ENCODE measurements at regions of chr12 and their contacts with region 1.

Region 1: DNA sequence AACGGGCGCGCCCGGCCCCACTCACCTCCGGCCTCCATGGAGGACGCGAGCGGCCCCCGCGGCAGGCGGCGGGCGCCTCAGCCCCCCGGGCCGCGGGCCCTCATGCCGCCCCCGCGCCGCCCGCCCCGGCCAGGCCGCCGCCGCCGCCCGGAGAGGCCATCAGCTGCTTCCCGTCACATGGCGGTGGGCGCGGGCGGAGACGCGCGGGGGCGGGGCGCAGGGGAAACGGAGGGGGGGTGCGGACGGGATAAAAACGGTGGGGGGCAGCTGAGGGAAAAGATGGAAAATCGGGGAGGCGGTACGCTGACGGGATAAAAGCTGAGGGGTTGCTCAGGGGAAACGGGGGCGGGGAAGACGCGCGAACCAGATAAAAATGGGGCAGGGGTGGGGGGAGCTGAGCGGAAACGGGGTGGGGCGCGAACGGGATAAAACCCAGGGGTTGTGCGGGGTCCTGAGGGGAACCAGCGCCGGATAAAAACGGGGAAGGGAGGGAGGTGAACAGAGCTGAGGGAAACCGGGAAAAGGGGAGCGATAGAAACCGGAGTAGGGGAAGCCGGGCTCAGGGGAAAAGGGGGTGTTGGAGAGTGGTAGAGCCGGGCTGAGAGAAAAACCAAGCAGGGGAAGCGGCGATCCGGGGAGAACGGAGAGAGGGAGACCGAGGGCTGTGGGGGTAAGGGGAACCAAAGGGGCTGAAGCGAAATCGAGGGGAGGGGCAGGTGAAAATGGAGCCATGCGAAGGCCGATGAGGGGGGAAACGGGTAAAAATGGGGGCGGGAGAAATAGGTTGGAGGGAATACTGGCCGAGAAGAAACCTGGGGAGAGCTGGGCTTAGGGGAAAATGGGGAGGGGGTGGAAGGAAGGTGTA is at the start of gene WSB2:
- DNase-seq: peak; percentile 88
- H3K4me3 Mint-ChIP-seq: peak within 1 kb of the TSS; percentile 93
- H3K27ac Mint-ChIP-seq: peak within 1 kb of the TSS; percentile 97
- H3K4me1 Mint-ChIP-seq: peaks cover 48% of the 10 kb centered on the region
- H3K27me3 Mint-ChIP-seq: no peaks in the 10 kb centered on the region
- total RNA-seq, gene WSB2: 129 and 133 TPM in 2 replicates

Region 2: GRCh38 chr12:118016424-118017264 is 44.6 kb before region 1 on chr12 and contains the start of gene RFC5:
- intact Hi-C with region 1: loop called (anchors 2 kb)
- DNase-seq: peak; percentile 99
- H3K4me3 Mint-ChIP-seq: peak within 1 kb of the TSS; percentile 98
- H3K27ac Mint-ChIP-seq: peak within 1 kb of the TSS; percentile 94
- H3K4me1 Mint-ChIP-seq: peaks cover 17% of the 10 kb centered on the region
- H3K27me3 Mint-ChIP-seq: peaks cover 7% of the 10 kb centered on the region
- total RNA-seq, gene RFC5: 82.9 and 84.4 TPM in 2 replicates

Region 3: GRCh38 chr12:118035246-118036041 is 25.8 kb before region 1 on chr12:
- intact Hi-C with region 1: loop called (anchors 1 kb)
- DNase-seq: no peak
- H3K4me3 Mint-ChIP-seq: peak overlapping the region; percentile 57
- H3K27ac Mint-ChIP-seq: peak overlapping the region; percentile 99
- H3K4me1 Mint-ChIP-seq: peaks cover 46% of the 10 kb centered on the region
- H3K27me3 Mint-ChIP-seq: peaks cover 2% of the 10 kb centered on the region

Region 4: GRCh38 chr12:118044075-118044474 is 17.2 kb before region 1 on chr12:
- intact Hi-C with region 1: loop called (anchors 1 kb)
- DNase-seq: no peak
- H3K4me3 Mint-ChIP-seq: peak overlapping the region; percentile 66
- H3K27ac Mint-ChIP-seq: peak overlapping the region; percentile 95
- H3K4me1 Mint-ChIP-seq: peaks cover 48% of the 10 kb centered on the region
- H3K27me3 Mint-ChIP-seq: no peaks in the 10 kb centered on the region

Region 5: GRCh38 chr12:118082161-118082560 is 20.9 kb after region 1 on chr12:
- intact Hi-C with region 1: no loop called
- DNase-seq: no peak
- H3K4me3 Mint-ChIP-seq: no peak overlapping the region
- H3K27ac Mint-ChIP-seq: no peak overlapping the region
- H3K4me1 Mint-ChIP-seq: no peaks in the 10 kb centered on the region
- H3K27me3 Mint-ChIP-seq: no peaks in the 10 kb centered on the region

Region 6: GRCh38 chr12:118103604-118104382 is 42.5 kb after region 1 on chr12 and contains the start of gene VSIG10:
- intact Hi-C with region 1: loop called (anchors 2 kb)
- DNase-seq: peak; percentile 80
- H3K4me3 Mint-ChIP-seq: peak within 1 kb of the TSS; percentile 91
- H3K27ac Mint-ChIP-seq: peak within 1 kb of the TSS; percentile 78
- H3K4me1 Mint-ChIP-seq: peaks cover 5% of the 10 kb centered on the region
- H3K27me3 Mint-ChIP-seq: peaks cover 18% of the 10 kb centered on the region
- total RNA-seq, gene VSIG10: 12.8 and 14.4 TPM in 2 replicates

Region 7: DNA sequence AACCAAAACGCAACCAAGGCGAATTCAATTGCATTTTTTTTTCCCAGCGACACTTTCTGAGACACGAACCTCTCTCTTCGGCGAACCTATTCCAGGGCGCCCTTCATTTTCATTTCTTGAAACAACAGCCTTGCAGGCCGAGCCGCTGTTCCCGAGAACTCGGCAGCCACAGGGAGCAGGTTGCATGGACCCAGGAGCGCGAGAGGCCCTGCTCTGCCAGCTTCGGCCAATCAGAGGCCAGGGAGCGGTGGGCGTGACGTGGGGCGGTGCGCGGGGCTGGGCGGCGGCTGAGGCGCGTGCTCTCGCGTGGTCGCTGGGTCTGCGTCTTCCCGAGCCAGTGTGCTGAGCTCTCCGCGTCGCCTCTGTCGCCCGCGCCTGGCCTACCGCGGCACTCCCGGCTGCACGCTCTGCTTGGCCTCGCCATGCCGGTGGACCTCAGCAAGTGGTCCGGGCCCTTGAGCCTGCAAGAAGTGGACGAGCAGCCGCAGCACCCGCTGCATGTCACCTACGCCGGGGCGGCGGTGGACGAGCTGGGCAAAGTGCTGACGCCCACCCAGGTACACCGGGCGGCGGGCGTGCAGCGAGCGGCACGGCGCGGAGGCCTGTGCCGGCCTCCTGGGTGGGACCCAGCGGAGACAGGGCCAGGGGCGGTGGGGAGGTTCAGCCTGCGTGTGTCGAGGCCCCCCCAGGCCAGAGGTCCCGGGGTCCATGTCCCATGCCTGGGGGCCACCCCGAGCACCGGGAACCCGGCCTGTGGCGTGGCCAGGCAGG is 74.7 kb after region 1 on chr12 and contains the start of gene PEBP1:
- intact Hi-C with region 1: loop called (anchors 1 kb)
- DNase-seq: peak; percentile 99
- H3K4me3 Mint-ChIP-seq: peak within 1 kb of the TSS; percentile 99
- H3K27ac Mint-ChIP-seq: peak within 1 kb of the TSS; percentile 95
- H3K4me1 Mint-ChIP-seq: peaks cover 24% of the 10 kb centered on the region
- H3K27me3 Mint-ChIP-seq: no peaks in the 10 kb centered on the region
- total RNA-seq, gene PEBP1: 206 and 209 TPM in 2 replicates

Region 8: DNA sequence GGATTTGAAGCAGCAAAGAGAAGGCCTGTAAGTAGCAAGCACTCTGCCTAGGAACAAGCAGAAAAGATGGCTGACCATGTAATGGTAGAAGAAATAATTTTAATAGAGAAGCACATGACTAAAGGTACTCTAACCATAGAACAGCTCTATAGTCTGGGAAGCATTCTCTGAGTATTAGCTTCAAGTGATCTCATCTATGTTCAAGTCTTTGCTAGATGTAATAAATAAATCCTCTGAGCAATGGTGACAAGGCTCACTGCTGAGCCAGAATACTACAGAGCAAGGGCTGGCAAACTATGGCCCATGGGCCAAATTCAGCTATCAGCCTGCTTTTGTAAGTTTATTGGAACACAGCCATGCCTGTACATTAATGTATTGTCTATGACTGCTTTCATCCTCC is 159.5 kb after region 1 on chr12:
- intact Hi-C with region 1: no loop called
- DNase-seq: peak; percentile 39
- H3K4me3 Mint-ChIP-seq: no peak overlapping the region
- H3K27ac Mint-ChIP-seq: no peak overlapping the region
- H3K4me1 Mint-ChIP-seq: no peaks in the 10 kb centered on the region
- H3K27me3 Mint-ChIP-seq: no peaks in the 10 kb centered on the region

Region 9: GRCh38 chr12:118357257-118358007 is 296.2 kb after region 1 on chr12:
- intact Hi-C with region 1: loop called (anchors 5 kb)
- DNase-seq: peak; percentile 80
- H3K4me3 Mint-ChIP-seq: peak overlapping the region; percentile 95
- H3K27ac Mint-ChIP-seq: peak overlapping the region; percentile 93
- H3K4me1 Mint-ChIP-seq: peaks cover 38% of the 10 kb centered on the region
- H3K27me3 Mint-ChIP-seq: no peaks in the 10 kb centered on the region